Body of pancreas (tissue), 4 donors: ENCODE measurements at regions of chr4 and their contacts with region 1.

Region 1: DNA sequence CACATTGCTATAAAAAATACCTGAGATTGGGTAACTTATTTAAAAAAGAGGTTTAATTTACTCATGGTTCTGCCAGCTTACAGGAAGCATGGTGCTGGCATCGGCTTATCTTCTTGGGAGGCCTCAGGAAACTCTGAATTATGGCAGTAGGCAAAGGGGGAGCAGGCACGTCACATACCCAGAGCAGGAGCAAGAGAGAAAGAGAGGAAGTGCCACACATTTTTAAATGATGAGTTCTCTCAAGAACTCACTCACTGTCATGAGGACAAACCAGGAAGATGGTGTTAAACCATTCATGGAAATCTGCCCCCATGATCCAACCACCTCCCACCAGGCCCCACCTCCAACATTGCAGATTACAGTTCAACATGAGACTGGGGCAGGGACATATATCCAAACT is 10.0 kb upstream of the AFF1 start:
- DNase-seq: no peak
- ATAC-seq: no peak
- H3K4me3 ChIP-seq: no peak overlapping the region
- H3K27ac ChIP-seq: no peak overlapping the region
- H3K4me1 ChIP-seq: peaks cover 15% of the 10 kb centered on the region
- H3K27me3 ChIP-seq: no peaks in the 10 kb centered on the region
- CTCF ChIP-seq: no peak
- POLR2A ChIP-seq: no peak

Region 2: GRCh38 chr4:87093443-87094123 is 168.8 kb after region 1 on chr4:
- intact Hi-C with region 1: loop called (anchors 5 kb)
- DNase-seq: peak; percentile 33 to 55 (median 42)
- ATAC-seq: peak; percentile 65
- H3K4me3 ChIP-seq: no peak overlapping the region
- H3K27ac ChIP-seq: peak overlapping the region in 2 of 4 donors; percentile 6 to 67
- H3K4me1 ChIP-seq: peaks cover 22% of the 10 kb centered on the region
- H3K27me3 ChIP-seq: no peaks in the 10 kb centered on the region
- CTCF ChIP-seq: peak; percentile 38 to 72 (median 59)
- POLR2A ChIP-seq: no peak

Region 3: GRCh38 chr4:87235020-87235671 is 310.3 kb after region 1 on chr4:
- intact Hi-C with region 1: loop called (anchors 5 kb)
- DNase-seq: no peak
- ATAC-seq: no peak
- H3K4me3 ChIP-seq: peak overlapping the region in 1 of 2 donors; percentile 25
- H3K27ac ChIP-seq: no peak overlapping the region
- H3K4me1 ChIP-seq: peaks cover 3% of the 10 kb centered on the region
- H3K27me3 ChIP-seq: no peaks in the 10 kb centered on the region
- CTCF ChIP-seq: no peak
- POLR2A ChIP-seq: no peak